Right ventricle myocardium superior (tissue), 1 donor: ENCODE measurements at regions of chr11 and their contacts with region 1.

Region 1: GRCh38 chr11:20609727-20610707 is 10.6 kb downstream of the SLC6A5 start:
- DNase-seq: peak; percentile 84
- ATAC-seq: peak; percentile 98

Region 2: DNA sequence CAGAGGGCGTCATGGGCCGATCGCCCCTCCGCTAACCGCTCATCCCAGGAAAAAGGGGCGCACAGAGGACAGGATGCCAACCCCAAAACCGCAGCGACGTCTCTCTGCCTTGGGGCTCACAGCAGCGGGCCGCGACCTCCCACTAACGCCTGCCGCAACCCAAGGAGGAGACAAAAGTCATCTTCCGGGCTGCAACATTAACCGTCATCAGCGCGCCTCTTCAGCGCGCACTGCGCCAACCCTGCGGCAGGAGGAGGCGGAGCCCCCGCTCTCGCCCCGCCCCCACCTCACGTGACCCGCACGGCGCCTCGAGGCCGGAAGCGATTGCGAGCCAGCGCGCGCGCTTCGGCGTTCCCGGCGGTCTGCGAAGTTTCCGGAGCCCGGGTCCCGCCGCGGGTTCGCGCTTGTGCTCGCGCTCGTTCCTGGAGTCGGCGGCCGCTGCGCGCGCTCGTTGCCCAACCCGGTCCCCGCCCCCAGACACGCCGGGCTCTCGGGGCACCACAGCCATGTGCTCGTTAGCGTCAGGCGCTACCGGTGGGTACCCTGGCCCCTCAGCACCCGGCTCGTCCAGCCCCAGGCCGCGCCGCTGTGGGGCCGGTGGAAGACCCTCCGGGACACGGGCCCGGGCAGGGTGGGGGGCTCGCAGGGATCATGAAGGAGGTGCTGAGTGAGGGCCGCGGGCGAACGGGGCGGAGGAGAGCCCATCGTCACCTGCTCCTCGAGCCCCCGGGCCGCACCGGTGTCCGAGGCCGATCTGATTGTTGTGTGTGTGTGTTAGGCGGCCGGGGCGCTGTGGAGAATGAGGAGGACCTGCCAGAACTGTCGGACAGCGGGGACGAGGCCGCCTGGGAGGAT is 222.5 kb before region 1 on chr11 and contains the start of gene PRMT3:
- intact Hi-C with region 1: loop called (anchors 5 kb)
- DNase-seq: peak; percentile 97
- ATAC-seq: peak; percentile 98
- total RNA-seq, gene PRMT3: 13.3 TPM